Psoas muscle (tissue), 8 donors: ENCODE measurements at regions of chrX and their contacts with region 1.

Region 1: DNA sequence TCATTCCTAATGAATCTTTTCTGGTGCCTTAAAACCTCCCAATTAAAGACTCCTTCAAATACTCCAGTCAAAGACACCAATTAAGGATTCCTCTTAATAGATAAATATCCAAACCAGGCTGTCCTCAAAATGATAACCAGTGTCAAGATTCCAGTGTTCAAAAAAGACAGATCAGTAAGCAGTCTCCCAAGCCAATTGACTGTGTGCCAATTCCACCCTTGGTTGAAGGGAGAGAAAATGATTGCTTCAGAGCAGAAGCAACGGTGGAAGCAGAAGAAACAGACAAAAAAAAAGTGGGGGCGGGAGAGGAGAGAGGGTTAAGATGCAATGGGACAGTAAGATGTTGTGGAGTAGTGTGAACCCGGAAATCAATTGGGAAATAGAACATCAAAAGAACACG is 216.0 kb upstream of the FTHL17 start:
- DNase-seq: no peak
- ATAC-seq: no peak
- H3K4me3 ChIP-seq: no peak overlapping the region
- H3K27ac ChIP-seq: no peak overlapping the region
- H3K4me1 ChIP-seq: no peaks in the 10 kb centered on the region
- H3K27me3 ChIP-seq: no peaks in the 10 kb centered on the region
- CTCF ChIP-seq: no peak

Region 2: GRCh38 chrX:31070057-31070468 is 217.8 kb before region 1 on chrX:
- intact Hi-C with region 1: no loop called
- DNase-seq: no peak
- ATAC-seq: no peak
- H3K4me3 ChIP-seq: no peak overlapping the region
- H3K27ac ChIP-seq: no peak overlapping the region
- H3K4me1 ChIP-seq: no peaks in the 10 kb centered on the region
- H3K27me3 ChIP-seq: peaks cover 0 to 5% (median 0%) of the 10 kb centered on the region in 3 donors
- CTCF ChIP-seq: no peak

Region 3: GRCh38 chrX:31209005-31209612 is 78.8 kb before region 1 on chrX:
- intact Hi-C with region 1: no loop called
- DNase-seq: no peak
- ATAC-seq: no peak
- H3K4me3 ChIP-seq: no peak overlapping the region
- H3K27ac ChIP-seq: no peak overlapping the region
- H3K4me1 ChIP-seq: no peaks in the 10 kb centered on the region
- H3K27me3 ChIP-seq: no peaks in the 10 kb centered on the region
- CTCF ChIP-seq: no peak

Region 4: DNA sequence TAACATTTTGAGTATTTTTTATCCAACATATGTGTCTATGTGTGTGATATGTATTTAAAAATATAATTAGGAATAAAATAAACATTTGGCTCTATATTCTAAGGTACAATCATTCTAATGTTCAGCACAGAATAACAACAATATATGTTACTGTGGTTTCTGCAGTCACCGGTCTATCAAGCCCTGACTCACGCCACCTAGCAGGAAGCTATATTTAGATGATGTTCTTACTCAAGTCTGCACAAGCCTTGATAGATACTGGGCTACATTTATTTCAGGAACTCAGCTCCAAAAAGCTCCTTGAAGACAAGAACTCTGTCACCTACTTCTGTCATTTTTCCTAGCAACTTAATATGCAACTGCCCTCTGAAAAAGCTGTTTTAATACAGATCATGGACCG is 64.0 kb before region 1 on chrX:
- intact Hi-C with region 1: loop called in 1 of 2 experiments (anchors 10 kb)
- DNase-seq: no peak
- ATAC-seq: peak; percentile 70 to 91 (median 86)
- H3K4me3 ChIP-seq: no peak overlapping the region
- H3K27ac ChIP-seq: peak overlapping the region; percentile 64
- H3K4me1 ChIP-seq: peaks cover 9% of the 10 kb centered on the region
- H3K27me3 ChIP-seq: peaks cover 0 to 7% (median 0%) of the 10 kb centered on the region in 3 donors
- CTCF ChIP-seq: no peak